ENCODE measurements at regions of chr3 and their contacts with region 1.

Region 1: DNA sequence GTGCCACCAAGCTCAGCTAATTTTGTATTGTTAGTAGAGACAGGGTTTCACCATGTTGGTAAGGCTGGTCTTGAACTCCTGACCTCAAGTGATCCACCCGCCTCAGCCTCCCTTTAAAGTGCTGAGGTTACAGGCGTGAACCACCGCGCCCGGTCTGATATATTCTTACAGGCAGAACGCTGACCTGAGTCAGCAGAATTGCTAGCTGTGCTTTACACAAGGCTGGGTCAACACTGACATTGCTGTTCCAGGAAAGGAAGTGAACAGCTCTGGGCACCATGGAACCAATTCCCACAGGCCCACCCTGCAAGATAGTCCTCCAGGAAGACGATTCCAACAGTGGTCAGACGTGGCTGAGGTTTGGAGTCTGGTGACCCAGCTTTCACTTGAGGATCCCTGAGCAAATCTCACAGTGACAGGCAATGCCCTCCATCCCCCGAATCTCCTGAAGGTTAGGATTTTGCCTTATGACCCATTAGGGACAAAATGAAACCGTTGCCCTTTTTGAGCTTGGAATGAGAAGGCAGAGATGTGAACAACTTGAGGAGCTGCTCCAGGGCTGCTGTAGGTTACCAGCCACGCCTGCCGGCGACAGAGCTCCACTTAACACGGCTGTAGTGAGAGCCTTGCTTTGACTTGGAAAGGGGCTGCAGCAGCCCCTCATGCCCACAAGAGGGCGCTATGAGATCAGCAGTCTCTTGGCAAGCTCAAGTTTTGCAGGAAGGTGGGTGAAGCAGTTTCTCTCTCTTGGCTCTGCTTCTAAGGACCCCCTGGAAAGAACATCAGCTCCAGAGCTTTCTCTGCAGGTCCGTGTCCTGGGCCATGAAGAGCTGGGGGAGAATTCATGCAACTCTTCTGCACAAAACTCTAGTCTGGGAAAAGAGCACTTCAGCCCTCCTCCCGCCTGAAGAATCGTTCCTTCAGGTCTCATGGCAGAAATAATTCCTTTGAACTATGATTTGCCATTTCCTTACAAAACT is 74.1 kb downstream of the SENP2 start:
- DNase-seq: peak; percentile 80 to 89 (median 82)
- ATAC-seq: peak; percentile 95
- H3K4me3 ChIP-seq: no peak overlapping the region
- H3K27ac ChIP-seq: no peak overlapping the region; the same call in 2 of the 3 replicates
- H3K4me1 ChIP-seq: peaks cover 2 to 7% of the 10 kb centered on the region in 2 experiments; a peak in 4 of 5 replicates
- H3K27me3 ChIP-seq: no peaks in the 10 kb centered on the region
- CTCF ChIP-seq: peak; percentile 94 to 98 (median 95)
- EP300 ChIP-seq: no peak
- POLR2A ChIP-seq: no peak
- RAD21 ChIP-seq: peak; percentile 86 to 89

Region 2: GRCh38 chr3:185537369-185537970 is 122.8 kb before region 1 on chr3:
- CTCF ChIA-PET with region 1: no interaction called
- POLR2A ChIA-PET with region 1: no interaction called
- in situ Hi-C with region 1: no loop called
- intact Hi-C with region 1: no loop called
- DNase-seq: peak; percentile 63 to 82 (median 73)
- ATAC-seq: peak; percentile 96
- H3K4me3 ChIP-seq: no peak overlapping the region
- H3K27ac ChIP-seq: peak overlapping the region; percentile 54; the same call in 2 of the 3 replicates
- H3K4me1 ChIP-seq: peaks cover 4 to 5% of the 10 kb centered on the region in 2 experiments; a peak in 3 of 5 replicates
- H3K27me3 ChIP-seq: no peaks in the 10 kb centered on the region
- CTCF ChIP-seq: no peak
- EP300 ChIP-seq: peak; percentile 60
- POLR2A ChIP-seq: no peak
- RAD21 ChIP-seq: no peak

Region 3: DNA sequence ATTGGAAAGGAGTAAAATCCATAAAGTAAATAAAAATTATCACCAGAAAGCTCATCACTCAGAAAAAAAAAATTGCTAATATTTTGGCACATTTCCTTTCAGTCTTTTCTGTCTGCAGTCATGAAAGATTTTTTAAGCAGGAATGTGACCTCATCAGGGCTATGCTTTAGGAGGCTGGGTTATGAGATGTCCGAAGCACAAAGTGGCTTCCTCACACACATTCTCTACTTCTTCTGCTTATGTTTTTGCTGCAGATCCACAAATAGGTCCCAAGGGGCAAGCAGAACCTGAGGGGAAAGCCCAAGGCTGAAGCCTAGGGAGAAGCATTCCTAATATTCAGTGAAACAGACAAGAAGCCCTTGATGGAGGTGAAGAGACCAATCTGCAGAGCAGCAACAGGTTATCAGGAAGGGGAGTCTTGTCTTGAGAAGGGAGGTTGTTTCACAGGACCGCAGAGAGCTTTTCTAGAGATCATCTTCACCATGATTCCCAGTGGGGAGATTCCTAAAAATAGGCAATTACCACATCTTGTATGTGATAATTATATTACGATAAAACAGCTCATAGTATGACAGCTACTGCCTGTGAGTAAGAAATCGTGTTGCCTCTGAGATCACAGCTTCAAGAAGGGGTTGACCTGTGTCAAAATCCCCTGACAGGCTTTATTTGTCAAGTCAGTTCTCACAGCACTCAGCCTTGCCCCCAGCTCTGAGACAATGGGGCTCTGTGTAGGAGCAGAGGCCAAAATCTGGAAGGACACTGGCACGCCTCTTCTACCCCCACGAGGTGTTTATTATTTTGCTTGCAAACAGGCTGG is 104.1 kb after region 1 on chr3:
- CTCF ChIA-PET with region 1: no interaction called
- POLR2A ChIA-PET with region 1: interaction called, 3 read pairs
- in situ Hi-C with region 1: no loop called
- intact Hi-C with region 1: loop called (anchors 1 kb)
- DNase-seq: no peak
- ATAC-seq: peak; percentile 23
- H3K4me3 ChIP-seq: no peak overlapping the region
- H3K27ac ChIP-seq: no peak overlapping the region
- H3K4me1 ChIP-seq: peaks cover 4 to 34% of the 10 kb centered on the region in 2 experiments; a peak in 4 of 5 replicates
- H3K27me3 ChIP-seq: no peaks in the 10 kb centered on the region; a peak in 1 of 5 replicates
- CTCF ChIP-seq: no peak
- EP300 ChIP-seq: no peak
- POLR2A ChIP-seq: no peak
- RAD21 ChIP-seq: no peak

Region 4: DNA sequence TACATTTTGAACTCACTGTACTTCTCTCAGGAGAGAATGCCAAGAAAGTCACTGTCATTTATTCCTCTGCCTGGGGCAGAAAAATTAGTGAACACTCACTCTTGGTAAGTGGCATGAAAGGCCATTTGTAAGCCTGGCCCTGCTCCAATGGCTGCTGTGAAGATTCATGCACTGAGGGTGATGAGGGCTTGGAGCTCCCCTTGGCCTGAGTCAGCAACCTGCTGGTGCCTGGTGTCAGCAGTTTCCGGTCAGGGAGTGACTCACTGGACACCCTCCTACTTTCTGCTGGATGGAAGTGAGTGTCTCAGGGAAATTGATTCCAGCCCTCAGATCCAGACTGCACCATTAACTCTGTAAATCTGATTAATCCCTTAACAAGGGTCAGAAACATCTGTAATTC is 240.0 kb after region 1 on chr3:
- CTCF ChIA-PET with region 1: no interaction called
- POLR2A ChIA-PET with region 1: no interaction called
- in situ Hi-C with region 1: no loop called
- intact Hi-C with region 1: loop called (anchors 10 kb)
- DNase-seq: peak; percentile 47 to 90 (median 69)
- ATAC-seq: peak; percentile 99
- H3K4me3 ChIP-seq: no peak overlapping the region
- H3K27ac ChIP-seq: peak overlapping the region; percentile 53; the same call in 1 of the 3 replicates
- H3K4me1 ChIP-seq: peaks cover 4 to 5% of the 10 kb centered on the region in 2 experiments; a peak in 3 of 5 replicates
- H3K27me3 ChIP-seq: no peaks in the 10 kb centered on the region
- CTCF ChIP-seq: no peak
- EP300 ChIP-seq: peak; percentile 55; the same call in 1 of the 2 replicates
- POLR2A ChIP-seq: no peak
- RAD21 ChIP-seq: 0 out of 4 replicates have a peak, but pooled peaks of 1 of the 2 experiments have one; percentile 4

Region 5: DNA sequence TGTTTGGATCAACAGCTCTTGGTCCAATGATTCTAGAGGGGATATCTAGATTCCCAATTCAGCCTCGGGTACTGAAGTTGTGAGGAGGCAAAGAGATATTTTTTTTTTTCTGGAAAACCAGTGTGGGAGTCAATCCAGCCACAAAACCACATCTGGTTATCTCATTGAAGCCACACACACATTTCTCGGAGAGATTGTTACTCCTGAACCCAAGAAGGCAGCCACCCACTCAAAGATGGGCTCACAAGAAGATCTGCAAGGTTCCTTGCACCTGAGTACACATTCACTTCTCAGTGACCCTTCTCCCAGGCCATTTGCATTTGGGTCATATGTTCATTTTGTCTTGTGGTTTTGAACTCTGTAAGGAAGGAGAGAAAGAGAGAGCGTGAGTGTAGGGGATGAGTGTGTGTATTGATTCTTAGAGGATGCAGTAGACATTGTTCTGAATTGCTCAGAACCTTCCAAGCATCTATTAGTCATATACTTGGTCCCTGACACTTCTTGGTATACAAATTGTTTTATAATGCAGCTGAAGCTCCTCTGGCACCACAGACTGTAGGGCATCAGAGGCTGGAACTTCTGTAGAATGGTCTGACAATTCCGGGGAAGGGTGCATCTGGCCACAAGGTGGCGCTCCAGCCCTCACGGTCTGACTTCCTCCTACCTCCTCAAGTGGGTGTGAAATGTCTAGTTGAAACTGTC is 316.9 kb after region 1 on chr3:
- CTCF ChIA-PET with region 1: interaction called, 3 read pairs
- POLR2A ChIA-PET with region 1: no interaction called
- in situ Hi-C with region 1: no loop called
- intact Hi-C with region 1: loop called (anchors 5 kb)
- DNase-seq: peak; percentile 72 to 83 (median 74)
- ATAC-seq: peak; percentile 97
- H3K4me3 ChIP-seq: no peak overlapping the region
- H3K27ac ChIP-seq: no peak overlapping the region; the same call in 2 of the 3 replicates
- H3K4me1 ChIP-seq: peaks cover 0 to 13% of the 10 kb centered on the region in 2 experiments; a peak in 3 of 5 replicates
- H3K27me3 ChIP-seq: no peaks in the 10 kb centered on the region
- CTCF ChIP-seq: peak; percentile 85 to 97 (median 89)
- EP300 ChIP-seq: peak; percentile 91
- POLR2A ChIP-seq: no peak
- RAD21 ChIP-seq: peak; percentile 58 to 76